ENCODE measurements at regions of chr14 and their contacts with region 1.

Region 1: GRCh38 chr14:68248481-68249255 is 429.1 kb downstream of the RAD51B start:
- DNase-seq: no peak
- H3K4me3 ChIP-seq: no peak overlapping the region
- H3K27ac ChIP-seq: peak overlapping the region; percentile 69 to 73
- H3K4me1 ChIP-seq: peaks cover 7% of the 10 kb centered on the region
- H3K27me3 ChIP-seq: no peaks in the 10 kb centered on the region
- CTCF ChIP-seq: peak; percentile 25 to 79 (median 70)
- POLR2A ChIP-seq: no peak

Region 2: DNA sequence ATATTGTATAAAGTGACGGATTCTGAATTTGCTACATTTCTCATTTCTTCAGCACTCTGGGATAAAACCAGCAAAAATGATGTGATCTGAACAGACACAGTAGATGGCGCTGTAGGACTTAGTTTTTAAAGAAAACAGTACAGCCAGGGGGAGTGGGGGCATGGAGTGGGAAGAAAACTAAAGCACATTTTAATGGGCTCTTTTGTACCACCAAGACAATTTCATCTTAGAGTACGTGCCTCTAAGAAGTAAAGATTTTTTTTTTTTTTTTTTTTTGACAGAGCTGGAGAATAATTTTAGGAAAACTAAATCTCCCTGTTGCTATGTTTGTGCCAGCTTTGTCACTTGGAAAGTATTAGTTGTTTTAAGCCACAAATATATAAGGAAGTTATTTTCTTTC is 304.7 kb before region 1 on chr14:
- intact Hi-C with region 1: loop called (anchors 5 kb)
- DNase-seq: peak; percentile 88
- H3K4me3 ChIP-seq: no peak overlapping the region
- H3K27ac ChIP-seq: peak overlapping the region; percentile 38 to 84
- H3K4me1 ChIP-seq: peaks cover 16% of the 10 kb centered on the region
- H3K27me3 ChIP-seq: no peaks in the 10 kb centered on the region
- CTCF ChIP-seq: peak; percentile 51 to 95 (median 85)
- POLR2A ChIP-seq: no peak

Region 3: DNA sequence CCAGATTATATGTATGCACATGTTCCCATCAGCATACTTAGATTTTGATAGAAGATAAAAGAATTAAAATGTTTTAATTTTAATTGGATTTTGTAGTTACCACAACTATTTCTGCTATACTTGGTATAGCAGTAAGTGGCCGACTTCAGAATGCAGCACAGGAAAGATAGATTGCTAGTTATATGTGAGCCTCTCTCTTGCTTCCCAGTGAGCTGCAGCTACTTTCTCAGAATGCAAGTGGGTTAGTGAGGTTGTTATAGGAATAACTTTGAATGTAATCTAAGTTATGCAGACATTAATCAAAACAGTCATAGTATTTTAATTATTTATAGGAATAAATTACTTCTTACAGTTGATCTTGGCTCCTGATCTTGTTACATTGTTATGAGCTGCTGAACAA is 188.5 kb before region 1 on chr14:
- intact Hi-C with region 1: no loop called
- DNase-seq: no peak
- H3K4me3 ChIP-seq: no peak overlapping the region
- H3K27ac ChIP-seq: no peak overlapping the region
- H3K4me1 ChIP-seq: no peaks in the 10 kb centered on the region
- H3K27me3 ChIP-seq: no peaks in the 10 kb centered on the region
- CTCF ChIP-seq: no peak
- POLR2A ChIP-seq: no peak

Region 4: GRCh38 chr14:68520637-68521556 is 272.2 kb after region 1 on chr14:
- intact Hi-C with region 1: loop called (anchors 10 kb)
- DNase-seq: peak; percentile 43
- H3K4me3 ChIP-seq: no peak overlapping the region
- H3K27ac ChIP-seq: peak overlapping the region; percentile 52 to 61
- H3K4me1 ChIP-seq: peaks cover 6% of the 10 kb centered on the region
- H3K27me3 ChIP-seq: no peaks in the 10 kb centered on the region
- CTCF ChIP-seq: no peak
- POLR2A ChIP-seq: no peak

Region 5: GRCh38 chr14:68655911-68656360 is 407.3 kb after region 1 on chr14:
- intact Hi-C with region 1: loop called (anchors 10 kb)
- DNase-seq: no peak
- H3K4me3 ChIP-seq: no peak overlapping the region
- H3K27ac ChIP-seq: peak overlapping the region; percentile 14 to 22
- H3K4me1 ChIP-seq: peaks cover 3% of the 10 kb centered on the region
- H3K27me3 ChIP-seq: no peaks in the 10 kb centered on the region
- CTCF ChIP-seq: peak in 2 of 4 experiments; percentile 40 to 49
- POLR2A ChIP-seq: no peak

Region 6: GRCh38 chr14:68816262-68816942 is 567.7 kb after region 1 on chr14:
- intact Hi-C with region 1: loop called (anchors 1 kb)
- DNase-seq: peak; percentile 88
- H3K4me3 ChIP-seq: peak overlapping the region; percentile 36 to 38
- H3K27ac ChIP-seq: peak overlapping the region; percentile 95 to 98
- H3K4me1 ChIP-seq: peaks cover 17% of the 10 kb centered on the region
- H3K27me3 ChIP-seq: no peaks in the 10 kb centered on the region
- CTCF ChIP-seq: peak; percentile 92 to 99 (median 97)
- POLR2A ChIP-seq: peak; percentile 43

Measured in prostate gland (tissue), 2 donors.